HAP-1 (cell line): ENCODE measurements at regions of chr2 and their contacts with region 1.

Region 1: GRCh38 chr2:121699421-121700333 is 37.0 kb downstream of the NIFK start:
- DNase-seq: no peak
- H3K4me3 ChIP-seq: no peak overlapping the region
- H3K4me1 ChIP-seq: no peaks in the 10 kb centered on the region
- H3K27me3 ChIP-seq: no peaks in the 10 kb centered on the region

Region 2: DNA sequence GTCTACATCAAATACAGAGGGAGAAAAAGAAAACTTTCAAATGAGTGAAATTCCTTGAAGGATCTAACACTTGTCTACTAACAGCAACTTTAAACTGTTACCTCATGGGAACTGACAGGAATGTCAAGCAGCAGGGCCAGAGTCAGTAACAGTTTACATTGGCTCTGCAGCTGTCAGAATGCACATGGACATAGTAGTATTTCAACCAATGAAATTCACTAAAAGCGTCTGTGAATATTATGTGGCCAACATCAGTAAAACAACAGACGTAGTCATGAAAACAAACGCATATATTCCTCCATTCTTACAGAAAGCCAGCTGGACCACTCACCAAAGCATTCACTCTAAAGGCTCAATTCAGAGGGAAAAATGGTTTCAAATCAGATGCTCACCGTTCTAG is 248.3 kb before region 1 on chr2:
- in situ Hi-C with region 1: no loop called
- DNase-seq: no peak
- H3K4me3 ChIP-seq: no peak overlapping the region
- H3K4me1 ChIP-seq: no peaks in the 10 kb centered on the region; the same call in 1 of the 2 replicates
- H3K27me3 ChIP-seq: no peaks in the 10 kb centered on the region

Region 3: GRCh38 chr2:121530212-121530705 is 169.4 kb before region 1 on chr2:
- in situ Hi-C with region 1: loop called (anchors 25 kb)
- DNase-seq: peak; percentile 62 to 83
- H3K4me3 ChIP-seq: peak overlapping the region; percentile 47
- H3K4me1 ChIP-seq: peaks cover 22% of the 10 kb centered on the region
- H3K27me3 ChIP-seq: no peaks in the 10 kb centered on the region

Region 4: DNA sequence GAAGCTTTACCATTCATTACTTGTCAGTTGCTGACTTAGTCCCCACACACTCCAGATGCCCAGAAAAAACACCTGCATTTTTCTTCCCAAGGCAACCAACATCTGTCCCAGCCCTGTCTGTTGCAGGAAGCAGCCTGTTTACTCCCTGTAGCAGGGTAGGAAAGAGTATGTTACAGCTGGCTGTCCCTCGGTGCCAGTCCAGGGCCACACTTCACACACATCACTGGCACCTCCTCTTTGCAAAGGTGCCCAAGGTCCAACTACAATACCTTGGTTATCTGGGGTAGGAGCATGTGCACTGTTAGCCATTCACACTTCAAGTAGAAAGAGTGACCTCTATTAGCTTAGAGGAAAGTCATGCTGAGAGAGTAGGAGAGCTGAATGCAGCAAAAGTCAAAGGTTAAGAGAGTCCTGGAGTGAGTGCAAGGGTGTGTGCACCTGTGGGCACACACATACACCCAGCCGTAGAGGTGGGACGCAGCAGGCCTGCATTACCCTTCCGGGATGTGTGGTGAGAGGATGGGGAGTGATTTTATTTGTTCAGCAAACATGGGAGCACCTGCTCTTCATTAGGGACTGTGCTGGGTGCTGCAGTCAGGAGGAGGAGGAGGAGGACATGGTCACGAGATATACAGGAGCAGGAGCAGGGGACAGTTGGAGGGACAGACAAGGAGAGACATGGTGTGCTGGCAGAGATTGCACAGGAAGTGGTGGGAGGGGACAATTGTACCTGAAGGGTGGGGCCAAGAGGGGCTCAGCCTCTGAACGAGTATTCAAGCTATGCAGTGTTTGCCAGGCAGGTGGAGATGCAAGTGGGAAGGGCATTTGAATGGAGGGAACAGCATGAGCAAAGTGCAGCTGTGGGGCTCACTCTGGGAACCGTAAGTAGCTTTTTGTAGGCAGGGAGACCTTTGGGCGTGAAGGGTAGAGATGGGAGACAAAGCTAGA is 125.6 kb after region 1 on chr2:
- in situ Hi-C with region 1: no loop called
- DNase-seq: no peak
- H3K4me3 ChIP-seq: no peak overlapping the region
- H3K4me1 ChIP-seq: no peaks in the 10 kb centered on the region
- H3K27me3 ChIP-seq: no peaks in the 10 kb centered on the region